A549 (cell line): ENCODE measurements at regions of chr19 and their contacts with region 1.

Region 1: DNA sequence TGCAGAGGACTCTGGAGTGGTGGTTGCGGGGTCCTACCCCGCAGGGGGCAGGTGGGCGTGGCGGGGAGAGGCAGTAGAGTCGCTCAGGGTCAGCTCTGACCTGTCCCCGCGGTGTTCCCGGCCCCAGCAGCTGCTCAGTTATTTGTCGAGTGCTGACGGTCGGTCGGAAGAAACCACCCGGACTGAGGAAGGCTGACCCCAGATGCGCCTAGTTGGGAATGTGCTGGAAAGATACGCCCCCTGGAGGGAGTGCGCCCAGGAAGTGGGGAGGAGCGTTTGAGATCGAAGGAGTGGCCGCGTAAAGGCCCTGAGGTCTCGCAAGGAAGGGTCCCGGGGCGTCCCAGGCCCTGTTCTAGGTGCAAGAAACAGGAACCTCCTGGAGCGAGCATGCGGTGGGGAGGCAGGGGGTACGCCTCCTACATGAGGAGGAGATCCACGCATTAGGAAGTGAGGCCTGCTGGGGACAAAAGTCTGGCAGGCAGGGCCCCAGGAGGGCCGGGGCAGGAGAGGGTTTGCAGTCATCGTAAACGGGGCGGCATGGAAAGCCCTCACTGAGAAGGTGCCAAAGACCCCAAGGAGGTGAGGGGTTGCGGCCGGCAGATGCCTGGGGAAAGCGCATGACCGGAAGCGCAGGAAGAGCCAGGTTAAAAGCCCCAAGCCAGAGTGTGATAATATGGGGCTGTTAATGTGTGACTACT is 9.2 kb downstream of the CCDC8 start:
- DNase-seq: peak; percentile 80 to 93
- ATAC-seq: peak; percentile 89 to 90
- H3K4me3 ChIP-seq: peak overlapping the region; percentile 53
- H3K27ac ChIP-seq: peak overlapping the region; percentile 90 to 92
- H3K4me1 ChIP-seq: no peaks in the 10 kb centered on the region
- CTCF ChIP-seq: peak; percentile 32; the same call in 2 of the 3 replicates
- EP300 ChIP-seq: no peak
- POLR2A ChIP-seq: peak; percentile 78; the same call in 1 of the 2 replicates
- RAD21 ChIP-seq: no peak

Region 2: DNA sequence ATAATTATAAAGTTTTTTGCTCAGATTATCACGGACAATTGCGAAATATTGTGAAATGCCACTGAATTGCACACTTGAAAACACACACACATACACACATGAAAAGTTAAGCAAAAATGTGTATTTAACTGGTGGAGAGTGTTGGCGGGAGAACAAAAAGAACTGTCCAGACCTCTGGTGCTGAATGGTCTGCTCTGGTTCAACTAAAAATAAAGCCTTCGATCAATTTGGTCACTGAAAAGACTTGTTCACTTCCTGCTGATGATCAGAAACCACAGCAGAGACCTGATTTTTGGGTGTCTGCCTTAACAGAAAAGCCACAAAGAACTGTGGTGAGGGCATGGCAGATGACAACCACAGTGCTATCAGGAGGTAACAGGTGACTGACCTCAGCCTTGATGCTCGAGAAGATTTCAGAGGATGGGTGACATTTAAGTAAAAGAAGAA is 178.6 kb before region 1 on chr19:
- CTCF ChIA-PET with region 1: no interaction called
- POLR2A ChIA-PET with region 1: no interaction called
- DNase-seq: no peak
- ATAC-seq: no peak
- H3K4me3 ChIP-seq: no peak overlapping the region
- H3K27ac ChIP-seq: peak overlapping the region; percentile 38 to 86; a peak in 3 of 6 replicates
- H3K4me1 ChIP-seq: peaks cover 66% of the 10 kb centered on the region
- CTCF ChIP-seq: no peak
- EP300 ChIP-seq: no peak
- POLR2A ChIP-seq: no peak
- RAD21 ChIP-seq: no peak

Region 3: GRCh38 chr19:46373421-46374359 is 30.5 kb before region 1 on chr19:
- CTCF ChIA-PET with region 1: interaction called, 501 read pairs
- POLR2A ChIA-PET with region 1: no interaction called
- DNase-seq: peak; percentile 88 to 93
- ATAC-seq: peak; percentile 80 to 87
- H3K4me3 ChIP-seq: peak overlapping the region; percentile 21; the same call in 2 of the 3 replicates
- H3K27ac ChIP-seq: peak overlapping the region; percentile 90 to 94
- H3K4me1 ChIP-seq: peaks cover 49% of the 10 kb centered on the region
- CTCF ChIP-seq: peak; percentile 19; the same call in 1 of the 3 replicates
- EP300 ChIP-seq: peak in 1 of 2 experiments; percentile 6; a peak in 1 of 5 replicates
- POLR2A ChIP-seq: peak; percentile 21
- RAD21 ChIP-seq: no peak; a peak in 1 of 5 replicates

Region 4: DNA sequence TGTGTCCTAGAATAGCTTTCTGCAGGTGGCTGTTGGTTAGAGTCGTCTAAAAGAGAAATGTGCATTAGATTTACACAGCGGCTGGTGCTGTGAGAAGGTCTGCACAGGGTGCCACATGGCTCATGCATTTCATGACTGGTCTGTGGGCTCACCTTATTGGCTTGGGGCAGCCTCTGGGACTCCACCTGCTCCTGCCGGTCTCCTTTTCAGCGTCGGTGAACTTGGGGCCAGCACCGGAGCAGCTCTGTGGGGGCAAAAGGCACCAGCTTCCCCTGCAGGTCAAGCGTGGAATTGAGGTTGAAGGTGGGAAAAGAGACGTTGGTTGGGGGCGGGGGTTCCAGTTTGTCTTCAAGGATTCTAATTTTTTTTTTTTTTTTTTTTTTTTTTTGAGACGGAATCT is 27.6 kb after region 1 on chr19:
- CTCF ChIA-PET with region 1: interaction called, 43 read pairs
- POLR2A ChIA-PET with region 1: interaction called, 3 read pairs
- DNase-seq: peak in 1 of 2 experiments; percentile 34
- ATAC-seq: peak in 1 of 2 experiments; percentile 53; a peak in 3 of 6 replicates
- H3K4me3 ChIP-seq: no peak overlapping the region
- H3K27ac ChIP-seq: no peak overlapping the region
- H3K4me1 ChIP-seq: no peaks in the 10 kb centered on the region
- CTCF ChIP-seq: no peak
- EP300 ChIP-seq: no peak
- POLR2A ChIP-seq: no peak
- RAD21 ChIP-seq: peak in 1 of 2 experiments; percentile 43; a peak in 2 of 5 replicates

Region 5: DNA sequence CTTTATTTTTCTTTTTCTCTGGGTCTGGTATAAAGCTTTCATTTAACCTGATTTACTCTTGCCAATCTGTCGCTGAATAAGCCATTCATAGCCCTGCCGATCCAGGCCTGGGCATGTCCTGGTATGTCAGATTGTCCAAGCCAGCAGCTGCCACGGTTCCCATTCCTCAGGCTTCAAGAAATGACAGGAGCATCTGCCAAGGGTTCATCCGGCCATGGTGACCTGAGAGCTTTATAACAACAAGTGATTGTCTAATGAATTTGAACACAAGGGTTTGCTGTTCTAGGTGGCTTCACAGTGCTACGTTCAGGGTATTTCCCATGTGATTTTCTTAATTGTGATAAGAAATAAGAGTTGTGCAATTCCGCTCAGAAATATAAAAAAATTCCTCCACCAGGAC is 47.1 kb after region 1 on chr19:
- CTCF ChIA-PET with region 1: interaction called, 11 read pairs
- POLR2A ChIA-PET with region 1: no interaction called
- DNase-seq: no peak
- ATAC-seq: no peak
- H3K4me3 ChIP-seq: no peak overlapping the region
- H3K27ac ChIP-seq: no peak overlapping the region
- H3K4me1 ChIP-seq: no peaks in the 10 kb centered on the region
- CTCF ChIP-seq: no peak
- EP300 ChIP-seq: no peak
- POLR2A ChIP-seq: no peak
- RAD21 ChIP-seq: no peak

Region 6: DNA sequence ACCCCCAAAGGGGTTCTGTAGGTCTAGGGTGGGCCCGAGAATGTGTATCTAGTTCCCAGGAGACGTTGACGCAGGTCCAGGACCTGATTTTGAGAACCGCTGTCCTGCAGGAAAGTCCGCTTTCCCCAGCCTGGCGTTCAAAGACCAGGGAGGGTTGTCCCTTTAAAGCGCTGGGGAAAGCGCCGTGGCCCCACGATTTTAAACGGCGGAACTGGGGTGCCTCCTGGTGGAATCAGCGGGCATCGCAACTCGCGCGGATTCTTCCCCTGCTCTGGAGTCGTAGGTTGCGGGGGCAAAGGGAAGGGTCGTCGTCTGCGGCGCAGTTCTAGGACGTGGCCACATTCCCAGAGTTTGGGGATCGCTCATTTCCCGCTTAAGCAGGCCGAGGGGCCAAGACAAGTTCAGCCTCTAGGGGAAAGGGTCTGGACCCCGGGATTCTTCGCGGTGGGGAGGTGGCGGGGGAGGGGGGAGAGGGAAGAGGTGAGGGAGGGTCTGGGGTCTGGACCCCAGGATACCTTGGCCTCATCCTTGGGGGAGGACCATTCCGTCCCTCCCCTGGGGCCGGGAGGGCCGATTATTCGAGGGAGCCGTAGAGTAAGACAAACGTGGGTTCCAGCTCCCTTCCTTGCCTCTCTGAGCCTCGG is 83.7 kb after region 1 on chr19:
- CTCF ChIA-PET with region 1: interaction called, 358 read pairs
- POLR2A ChIA-PET with region 1: interaction called, 4 read pairs
- DNase-seq: peak; percentile 71 to 86
- ATAC-seq: peak; percentile 75 to 93
- H3K4me3 ChIP-seq: peak overlapping the region; percentile 46
- H3K27ac ChIP-seq: peak overlapping the region; percentile 65 to 72; a peak in 5 of 6 replicates
- H3K4me1 ChIP-seq: peaks cover 10% of the 10 kb centered on the region; the same call in 1 of the 3 replicates
- CTCF ChIP-seq: peak; percentile 98
- EP300 ChIP-seq: no peak
- POLR2A ChIP-seq: no peak
- RAD21 ChIP-seq: peak; percentile 99 to 100

Region 7: GRCh38 chr19:46503848-46504453 is 99.7 kb after region 1 on chr19:
- CTCF ChIA-PET with region 1: interaction called, 38 read pairs
- POLR2A ChIA-PET with region 1: no interaction called
- DNase-seq: no peak
- ATAC-seq: no peak
- H3K4me3 ChIP-seq: no peak overlapping the region
- H3K27ac ChIP-seq: no peak overlapping the region
- H3K4me1 ChIP-seq: no peaks in the 10 kb centered on the region
- CTCF ChIP-seq: no peak
- EP300 ChIP-seq: no peak
- POLR2A ChIP-seq: no peak
- RAD21 ChIP-seq: no peak